ENCODE measurements at regions of chr19 and their contacts with region 1.

Region 1: DNA sequence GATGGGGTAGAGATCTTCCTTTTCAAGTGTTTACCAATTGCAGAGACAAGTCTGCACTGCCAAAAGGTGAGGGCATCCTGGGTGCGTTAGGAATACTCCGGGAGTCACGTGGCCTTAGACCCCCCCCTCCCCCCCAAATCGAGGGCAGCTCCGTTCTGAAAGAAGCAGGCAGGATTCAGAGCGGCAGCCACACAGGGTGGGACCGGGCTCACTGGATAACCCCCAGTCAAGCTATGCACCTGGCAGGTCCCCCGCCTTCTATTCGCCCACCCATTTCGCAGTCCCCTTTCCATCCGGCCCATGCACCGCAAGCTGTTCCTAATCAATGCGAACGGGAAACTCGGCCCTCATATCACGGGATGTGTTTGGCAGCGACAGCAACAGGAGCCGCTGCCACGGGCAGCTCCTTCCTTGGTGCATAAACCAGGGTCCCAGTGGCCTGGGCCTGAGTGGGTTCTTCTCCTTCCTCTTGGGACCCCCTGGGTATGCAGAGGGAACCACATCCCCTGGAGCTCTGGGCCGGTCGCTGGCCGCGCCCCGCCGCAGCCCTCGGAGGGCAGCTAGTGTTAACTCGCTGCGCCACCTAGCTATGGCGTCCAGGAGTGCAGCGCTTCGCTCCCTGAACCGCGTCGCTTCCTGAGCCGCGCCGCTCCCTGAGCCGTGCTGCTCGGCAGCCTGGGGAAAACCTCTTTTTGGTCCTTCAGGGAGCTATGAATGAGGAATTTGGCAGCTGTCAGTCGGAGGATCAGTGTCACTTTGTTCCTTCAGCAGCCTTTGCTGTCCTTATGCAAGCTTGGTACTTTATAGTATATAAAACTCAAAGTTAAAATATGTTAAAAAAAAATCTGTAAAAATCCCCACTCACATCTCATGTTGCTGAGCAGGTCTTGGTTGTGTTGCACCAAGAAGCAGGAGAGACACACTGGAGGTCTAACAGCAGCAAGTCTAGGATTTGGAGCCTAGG is 41.4 kb downstream of the LYL1 start:
- DNase-seq: peak; percentile 68
- H3K4me3 Mint-ChIP-seq: peak overlapping the region; percentile 70
- H3K27ac Mint-ChIP-seq: no peak overlapping the region
- H3K4me1 Mint-ChIP-seq: peaks cover 4% of the 10 kb centered on the region
- H3K27me3 Mint-ChIP-seq: peaks cover 29% of the 10 kb centered on the region

Region 2: GRCh38 chr19:12974301-12975220 is 86.7 kb before region 1 on chr19:
- intact Hi-C with region 1: loop called (anchors 1 kb)
- DNase-seq: no peak
- H3K4me3 Mint-ChIP-seq: no peak overlapping the region
- H3K27ac Mint-ChIP-seq: no peak overlapping the region
- H3K4me1 Mint-ChIP-seq: peaks cover 1% of the 10 kb centered on the region
- H3K27me3 Mint-ChIP-seq: peaks cover 7% of the 10 kb centered on the region

Region 3: GRCh38 chr19:12983542-12984142 is 77.6 kb before region 1 on chr19:
- intact Hi-C with region 1: loop called (anchors 1 kb)
- DNase-seq: peak; percentile 77
- H3K4me3 Mint-ChIP-seq: no peak overlapping the region
- H3K27ac Mint-ChIP-seq: no peak overlapping the region
- H3K4me1 Mint-ChIP-seq: no peaks in the 10 kb centered on the region
- H3K27me3 Mint-ChIP-seq: peaks cover 5% of the 10 kb centered on the region

Region 4: GRCh38 chr19:13093407-13094105 is 32.3 kb after region 1 on chr19:
- intact Hi-C with region 1: loop called (anchors 1 kb)
- DNase-seq: peak; percentile 71
- H3K4me3 Mint-ChIP-seq: no peak overlapping the region
- H3K27ac Mint-ChIP-seq: no peak overlapping the region
- H3K4me1 Mint-ChIP-seq: peaks cover 21% of the 10 kb centered on the region
- H3K27me3 Mint-ChIP-seq: peaks cover 28% of the 10 kb centered on the region

Region 5: DNA sequence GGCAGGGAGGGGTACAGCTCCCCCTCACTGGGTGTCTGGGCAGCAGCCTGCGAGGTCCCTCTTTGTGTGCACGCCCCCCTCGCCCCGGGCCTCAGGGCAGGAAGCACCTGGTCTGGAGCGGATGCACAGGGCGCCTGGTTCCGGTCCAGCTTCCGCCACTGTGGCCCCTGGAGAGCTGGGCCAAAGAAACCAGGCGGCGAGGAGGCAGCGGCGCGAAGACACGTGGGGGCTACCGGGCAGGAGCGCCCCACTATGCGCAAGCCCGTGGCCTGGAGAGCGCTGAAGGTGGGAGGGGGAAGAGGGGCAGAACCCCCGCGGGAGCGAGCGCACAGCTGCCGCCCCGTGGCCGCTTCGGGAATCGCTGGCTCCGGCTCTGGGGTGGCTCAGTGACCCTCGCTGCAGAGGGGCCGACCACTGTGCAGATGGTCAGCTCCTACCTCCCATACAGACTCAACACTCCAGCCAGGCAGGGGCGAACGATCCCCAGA is 43.2 kb after region 1 on chr19:
- intact Hi-C with region 1: no loop called
- DNase-seq: peak; percentile 62
- H3K4me3 Mint-ChIP-seq: peak overlapping the region; percentile 92
- H3K27ac Mint-ChIP-seq: peak overlapping the region; percentile 95
- H3K4me1 Mint-ChIP-seq: peaks cover 24% of the 10 kb centered on the region
- H3K27me3 Mint-ChIP-seq: no peaks in the 10 kb centered on the region